OCI-LY7 (cell line): ENCODE measurements at regions of chr7 and their contacts with region 1.

Region 1: GRCh38 chr7:78039790-78040776 is 241.5 kb downstream of the PHTF2 start:
- DNase-seq: peak; percentile 50
- H3K4me3 ChIP-seq: no peak overlapping the region
- H3K27ac ChIP-seq: no peak overlapping the region
- H3K4me1 ChIP-seq: no peaks in the 10 kb centered on the region
- CTCF ChIP-seq: peak; percentile 87

Region 2: DNA sequence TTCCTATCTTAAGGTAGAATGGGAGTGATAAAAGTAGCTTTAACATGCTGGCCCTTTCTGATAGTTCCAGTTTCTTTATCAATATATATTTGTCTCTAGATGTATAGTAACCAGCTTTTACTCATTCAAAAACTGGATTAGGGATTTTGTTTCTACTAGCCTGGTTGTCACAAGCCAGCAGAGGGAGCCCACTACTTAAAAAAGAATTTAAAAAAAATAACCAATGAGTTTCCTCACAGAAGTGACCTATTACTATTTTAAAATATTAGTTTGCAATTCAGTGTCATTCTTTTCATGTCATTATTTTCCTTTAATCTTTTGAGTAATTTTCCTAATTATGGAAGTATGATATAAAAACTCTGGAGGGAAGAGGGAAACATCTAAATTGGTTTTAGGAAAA is 99.4 kb before region 1 on chr7:
- CTCF ChIA-PET with region 1: no interaction called
- POLR2A ChIA-PET with region 1: no interaction called
- intact Hi-C with region 1: loop called (anchors 1 kb)
- DNase-seq: peak; percentile 38
- H3K4me3 ChIP-seq: no peak overlapping the region
- H3K27ac ChIP-seq: no peak overlapping the region
- H3K4me1 ChIP-seq: peaks cover 29% of the 10 kb centered on the region
- CTCF ChIP-seq: peak; percentile 96